Astrocyte of the cerebellum (primary cell): ENCODE measurements at regions of chr9 and their contacts with region 1.

Region 1: GRCh38 chr9:123739387-123739786 is 190.5 kb downstream of the DENND1A start:
- DNase-seq: no peak
- H3K4me3 ChIP-seq: no peak overlapping the region
- CTCF ChIP-seq: no peak

Region 2: GRCh38 chr9:123686131-123686828 is 53.1 kb before region 1 on chr9:
- in situ Hi-C with region 1: loop called (anchors 5 kb)
- DNase-seq: peak; percentile 19
- H3K4me3 ChIP-seq: no peak overlapping the region
- CTCF ChIP-seq: no peak

Region 3: GRCh38 chr9:123825342-123826060 is 86.1 kb after region 1 on chr9:
- in situ Hi-C with region 1: no loop called
- DNase-seq: peak; percentile 13
- H3K4me3 ChIP-seq: no peak overlapping the region
- CTCF ChIP-seq: peak; percentile 35